Activated CD4-positive, alpha-beta memory T cell treated with anti-CD3 and anti-CD28 coated beads for 36 hours (primary cell): ENCODE measurements at regions of chr15 and their contacts with region 1.

Region 1: GRCh38 chr15:72685925-72686794 is at the starts of genes BBS4 and HIGD2B:
- DNase-seq: peak; percentile 93
- H3K4me3 Mint-ChIP-seq: peak within 1 kb of the TSS; percentile 85
- H3K27ac Mint-ChIP-seq: peak within 1 kb of the TSS; percentile 89
- H3K4me1 Mint-ChIP-seq: peaks cover 13% of the 10 kb centered on the region
- H3K27me3 Mint-ChIP-seq: no peaks in the 10 kb centered on the region
- total RNA-seq, gene BBS4: 12.6 to 15.5 TPM
- total RNA-seq, gene HIGD2B: 0.27 to 0.31 TPM

Region 2: GRCh38 chr15:72117486-72118399 is 568.4 kb before region 1 on chr15 and contains the start of gene MYO9A:
- CTCF ChIA-PET with region 1: no interaction called
- POLR2A ChIA-PET with region 1: interaction called, 3 read pairs
- intact Hi-C with region 1: loop called (anchors 5 kb)
- DNase-seq: peak; percentile 100
- H3K4me3 Mint-ChIP-seq: peak within 1 kb of the TSS; percentile 98
- H3K27ac Mint-ChIP-seq: peak within 1 kb of the TSS; percentile 98
- H3K4me1 Mint-ChIP-seq: peaks cover 34% of the 10 kb centered on the region
- H3K27me3 Mint-ChIP-seq: no peaks in the 10 kb centered on the region
- total RNA-seq, gene MYO9A: 18.3 to 20.2 TPM

Region 3: GRCh38 chr15:72495007-72495406 is 191.2 kb before region 1 on chr15:
- CTCF ChIA-PET with region 1: no interaction called
- POLR2A ChIA-PET with region 1: no interaction called
- intact Hi-C with region 1: no loop called
- DNase-seq: no peak
- H3K4me3 Mint-ChIP-seq: no peak overlapping the region
- H3K27ac Mint-ChIP-seq: no peak overlapping the region
- H3K4me1 Mint-ChIP-seq: peaks cover 60% of the 10 kb centered on the region
- H3K27me3 Mint-ChIP-seq: no peaks in the 10 kb centered on the region

Region 4: GRCh38 chr15:72671535-72671934 is 14.6 kb before region 1 on chr15:
- CTCF ChIA-PET with region 1: interaction called, 35 read pairs
- POLR2A ChIA-PET with region 1: no interaction called
- intact Hi-C with region 1: no loop called
- DNase-seq: no peak
- H3K4me3 Mint-ChIP-seq: no peak overlapping the region
- H3K27ac Mint-ChIP-seq: no peak overlapping the region
- H3K4me1 Mint-ChIP-seq: peaks cover 4% of the 10 kb centered on the region
- H3K27me3 Mint-ChIP-seq: peaks cover 12% of the 10 kb centered on the region

Region 5: GRCh38 chr15:72740219-72740618 is 54.1 kb after region 1 on chr15:
- CTCF ChIA-PET with region 1: interaction called, 3 read pairs
- POLR2A ChIA-PET with region 1: no interaction called
- intact Hi-C with region 1: loop called (anchors 2 kb)
- DNase-seq: no peak
- H3K4me3 Mint-ChIP-seq: no peak overlapping the region
- H3K27ac Mint-ChIP-seq: peak overlapping the region; percentile 43
- H3K4me1 Mint-ChIP-seq: peaks cover 35% of the 10 kb centered on the region
- H3K27me3 Mint-ChIP-seq: no peaks in the 10 kb centered on the region